PC-9 (cell line): ENCODE measurements at regions of chr4 and their contacts with region 1.

Region 1: GRCh38 chr4:94827481-94828110 is 69.8 kb downstream of the BMPR1B start:
- DNase-seq: peak; percentile 4 to 75
- H3K4me3 ChIP-seq: no peak overlapping the region
- H3K27ac ChIP-seq: peak overlapping the region; percentile 70
- H3K4me1 ChIP-seq: peaks cover 16% of the 10 kb centered on the region
- H3K27me3 ChIP-seq: no peaks in the 10 kb centered on the region
- CTCF ChIP-seq: no peak

Region 2: DNA sequence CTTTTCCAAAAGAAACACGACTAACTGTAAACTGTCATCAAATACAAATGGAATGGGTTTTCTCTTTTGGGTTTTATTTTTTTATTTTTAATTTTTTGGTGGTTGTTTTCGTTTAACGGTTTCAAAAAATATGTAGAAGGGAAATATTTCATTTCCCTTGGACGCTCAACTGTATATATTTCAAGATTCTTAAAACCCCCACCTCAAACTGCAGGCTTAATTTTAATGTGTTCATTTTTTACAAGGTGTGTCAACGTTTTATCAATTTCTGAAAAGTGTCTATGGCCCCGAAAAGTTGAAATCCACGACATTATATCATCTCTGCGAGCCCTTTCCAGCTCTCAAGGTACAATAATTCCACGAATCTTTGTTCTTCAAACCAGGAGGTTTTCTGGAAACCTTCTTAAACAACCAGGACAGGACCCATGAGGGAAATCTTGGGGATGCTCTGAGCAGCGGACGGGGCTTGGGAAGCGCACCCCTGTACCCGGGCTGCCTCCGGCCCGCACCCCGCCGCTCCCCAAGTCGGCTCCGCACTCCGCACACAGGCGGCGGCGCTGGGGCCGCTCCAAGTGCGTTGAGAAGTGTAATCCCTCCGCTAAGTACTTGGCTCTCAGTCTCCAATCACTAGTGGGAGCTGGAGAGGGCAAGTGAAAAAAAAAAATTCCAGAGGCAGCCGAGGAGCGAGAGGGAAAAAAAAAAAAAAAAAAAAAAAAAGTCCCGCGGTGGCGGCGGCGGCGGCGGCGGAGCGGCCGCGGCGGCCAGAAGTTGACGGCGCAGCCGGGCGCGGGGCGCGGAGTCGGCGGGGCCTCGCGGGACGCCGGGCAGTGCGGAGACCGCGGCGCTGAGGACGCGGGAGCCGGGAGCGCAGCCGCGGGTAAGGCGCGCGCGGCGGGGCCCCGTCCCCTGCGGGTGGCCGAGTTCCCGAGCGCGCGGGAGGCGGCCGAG is 70.1 kb before region 1 on chr4 and contains the start of gene BMPR1B:
- CTCF ChIA-PET with region 1: interaction called, 8 read pairs
- POLR2A ChIA-PET with region 1: no interaction called
- intact Hi-C with region 1: loop called (anchors 10 kb)
- DNase-seq: peak in 1 of 2 experiments; percentile 34
- H3K4me3 ChIP-seq: peak within 1 kb of the TSS; percentile 57
- H3K27ac ChIP-seq: no peak within 1 kb of the TSS
- H3K4me1 ChIP-seq: 0 out of 2 replicates have a peak, but pooled peaks cover 4% of the 10 kb centered on the region
- H3K27me3 ChIP-seq: peaks cover 11% of the 10 kb centered on the region
- CTCF ChIP-seq: no peak; the same call in 1 of the 2 replicates
- total RNA-seq, gene BMPR1B: 1.1 and 3.2 TPM in 2 replicates

Region 3: GRCh38 chr4:94798808-94799207 is 28.8 kb before region 1 on chr4:
- CTCF ChIA-PET with region 1: no interaction called
- POLR2A ChIA-PET with region 1: no interaction called
- intact Hi-C with region 1: no loop called
- DNase-seq: no peak
- H3K4me3 ChIP-seq: no peak overlapping the region
- H3K27ac ChIP-seq: no peak overlapping the region
- H3K4me1 ChIP-seq: no peaks in the 10 kb centered on the region
- H3K27me3 ChIP-seq: no peaks in the 10 kb centered on the region
- CTCF ChIP-seq: no peak

Region 4: GRCh38 chr4:94877973-94878372 is 50.4 kb after region 1 on chr4:
- CTCF ChIA-PET with region 1: no interaction called
- POLR2A ChIA-PET with region 1: interaction called, 15 read pairs
- intact Hi-C with region 1: no loop called
- DNase-seq: peak in 1 of 2 experiments; percentile 43
- H3K4me3 ChIP-seq: no peak overlapping the region
- H3K27ac ChIP-seq: peak overlapping the region; percentile 23; the same call in 1 of the 2 replicates
- H3K4me1 ChIP-seq: peaks cover 7% of the 10 kb centered on the region
- H3K27me3 ChIP-seq: no peaks in the 10 kb centered on the region
- CTCF ChIP-seq: no peak

Region 5: DNA sequence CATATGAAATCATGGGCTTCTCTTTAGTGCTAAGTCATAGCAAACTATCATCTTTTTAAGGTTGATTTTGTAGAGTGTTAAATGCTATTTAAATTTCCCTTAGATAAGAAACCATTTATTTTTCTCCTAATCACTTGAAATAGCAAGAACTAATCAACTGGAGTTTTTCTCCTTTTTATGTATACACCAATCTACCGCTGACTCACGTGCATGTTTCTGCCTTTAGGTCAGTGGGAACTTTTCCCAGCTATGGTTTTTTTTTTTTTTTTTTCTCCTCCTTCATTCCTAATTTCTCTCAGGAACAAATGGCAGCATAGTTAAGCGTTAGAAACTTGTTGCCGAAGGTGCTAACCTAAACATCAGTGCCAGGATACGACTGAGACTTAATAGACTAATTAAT is 106.6 kb after region 1 on chr4:
- CTCF ChIA-PET with region 1: no interaction called
- POLR2A ChIA-PET with region 1: no interaction called
- intact Hi-C with region 1: loop called (anchors 5 kb)
- DNase-seq: no peak
- H3K4me3 ChIP-seq: no peak overlapping the region
- H3K27ac ChIP-seq: peak overlapping the region; percentile 63
- H3K4me1 ChIP-seq: peaks cover 19% of the 10 kb centered on the region
- H3K27me3 ChIP-seq: no peaks in the 10 kb centered on the region
- CTCF ChIP-seq: no peak

Region 6: DNA sequence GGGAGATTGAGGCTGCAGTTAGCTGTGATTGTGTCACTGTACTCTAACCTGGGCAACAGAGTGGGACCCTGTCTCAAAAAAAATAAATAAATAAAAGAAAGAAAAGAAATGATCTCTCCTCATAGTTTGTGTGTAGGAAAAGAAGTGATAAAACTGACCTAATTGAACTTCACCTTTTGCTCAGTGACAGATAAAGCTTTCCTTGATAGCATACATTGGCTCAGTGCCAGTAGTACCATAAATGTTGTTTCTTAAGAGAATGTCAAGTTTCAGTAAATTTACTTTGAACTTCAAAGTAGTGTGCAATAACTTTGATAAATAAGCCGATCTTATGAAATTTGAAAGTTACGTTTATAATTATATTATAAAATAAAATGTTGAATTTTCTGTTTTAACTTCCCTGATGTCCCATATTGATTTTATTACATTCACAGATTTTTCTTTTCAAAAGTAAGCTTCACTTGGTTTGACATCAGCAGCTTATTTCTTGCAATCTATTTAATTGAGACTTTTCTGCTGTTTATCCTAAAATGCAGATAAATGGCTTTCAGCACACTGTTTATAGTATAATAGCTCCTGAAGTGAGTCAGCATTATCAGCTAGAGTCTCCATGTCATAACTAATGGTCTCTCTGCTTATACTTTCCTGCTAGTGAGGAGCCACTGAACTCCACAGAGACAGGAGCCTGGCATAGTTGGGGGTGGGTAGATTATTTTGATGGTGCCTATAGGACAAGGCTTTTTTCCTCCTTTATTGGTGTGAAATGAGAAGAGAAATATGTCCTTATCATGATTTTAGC is 260.3 kb after region 1 on chr4:
- CTCF ChIA-PET with region 1: no interaction called
- POLR2A ChIA-PET with region 1: no interaction called
- intact Hi-C with region 1: loop called (anchors 1 kb)
- DNase-seq: no peak
- H3K4me3 ChIP-seq: no peak overlapping the region
- H3K27ac ChIP-seq: no peak overlapping the region
- H3K4me1 ChIP-seq: peaks cover 36% of the 10 kb centered on the region
- H3K27me3 ChIP-seq: no peaks in the 10 kb centered on the region
- CTCF ChIP-seq: no peak